ENCODE measurements at regions of chr17 and their contacts with region 1.

Region 1: GRCh38 chr17:72602517-72603419 is 481.9 kb downstream of the SOX9 start:
- DNase-seq: peak; percentile 38 to 53
- H3K4me3 ChIP-seq: peak overlapping the region in 1 of 4 experiments; percentile 36; a peak in 2 of 8 replicates
- H3K27ac ChIP-seq: no peak overlapping the region
- H3K4me1 ChIP-seq: peaks cover 4 to 11% (median 7%) of the 10 kb centered on the region in 4 experiments; a peak in 5 of 7 replicates
- H3K27me3 ChIP-seq: no peaks in the 10 kb centered on the region
- CTCF ChIP-seq: peak; percentile 30 to 70 (median 36)
- EP300 ChIP-seq: no peak
- POLR2A ChIP-seq: no peak
- RAD21 ChIP-seq: peak; percentile 10 to 16; a peak in 2 of 4 replicates

Region 2: GRCh38 chr17:72592242-72592966 is 10.4 kb before region 1 on chr17:
- CTCF ChIA-PET with region 1: interaction called, 11 read pairs
- POLR2A ChIA-PET with region 1: interaction called, 25 read pairs
- DNase-seq: peak; percentile 58 to 90
- H3K4me3 ChIP-seq: peak overlapping the region; percentile 56 to 74 (median 70)
- H3K27ac ChIP-seq: no peak overlapping the region
- H3K4me1 ChIP-seq: peaks cover 9 to 28% (median 12%) of the 10 kb centered on the region in 4 experiments
- H3K27me3 ChIP-seq: peaks cover 8 to 29% (median 22%) of the 10 kb centered on the region in 4 experiments
- CTCF ChIP-seq: no peak
- EP300 ChIP-seq: no peak
- POLR2A ChIP-seq: peak; percentile 99
- RAD21 ChIP-seq: no peak

Region 3: GRCh38 chr17:72614871-72615626 is 12.3 kb after region 1 on chr17:
- CTCF ChIA-PET with region 1: interaction called, 13 read pairs
- POLR2A ChIA-PET with region 1: interaction called, 3 read pairs
- DNase-seq: no peak
- H3K4me3 ChIP-seq: peak overlapping the region in 1 of 4 experiments; percentile 48; a peak in 1 of 8 replicates
- H3K27ac ChIP-seq: no peak overlapping the region
- H3K4me1 ChIP-seq: peaks cover 2 to 6% (median 3%) of the 10 kb centered on the region in 4 experiments; a peak in 4 of 7 replicates
- H3K27me3 ChIP-seq: peaks cover 0 to 2% (median 0%) of the 10 kb centered on the region in 4 experiments; a peak in 2 of 7 replicates
- CTCF ChIP-seq: no peak
- EP300 ChIP-seq: no peak
- POLR2A ChIP-seq: no peak
- RAD21 ChIP-seq: no peak

Region 4: GRCh38 chr17:72640415-72641165 is 37.8 kb after region 1 on chr17:
- CTCF ChIA-PET with region 1: no interaction called
- POLR2A ChIA-PET with region 1: no interaction called
- DNase-seq: no peak
- H3K4me3 ChIP-seq: no peak overlapping the region
- H3K27ac ChIP-seq: no peak overlapping the region
- H3K4me1 ChIP-seq: no peaks in the 10 kb centered on the region
- H3K27me3 ChIP-seq: no peaks in the 10 kb centered on the region
- CTCF ChIP-seq: no peak
- EP300 ChIP-seq: no peak
- POLR2A ChIP-seq: no peak
- RAD21 ChIP-seq: no peak

Region 5: GRCh38 chr17:72699545-72699944 is 96.8 kb after region 1 on chr17:
- CTCF ChIA-PET with region 1: no interaction called
- POLR2A ChIA-PET with region 1: no interaction called
- DNase-seq: no peak
- H3K4me3 ChIP-seq: no peak overlapping the region
- H3K27ac ChIP-seq: no peak overlapping the region
- H3K4me1 ChIP-seq: no peaks in the 10 kb centered on the region
- H3K27me3 ChIP-seq: no peaks in the 10 kb centered on the region; a peak in 1 of 7 replicates
- CTCF ChIP-seq: no peak
- EP300 ChIP-seq: no peak
- POLR2A ChIP-seq: no peak
- RAD21 ChIP-seq: no peak

Region 6: DNA sequence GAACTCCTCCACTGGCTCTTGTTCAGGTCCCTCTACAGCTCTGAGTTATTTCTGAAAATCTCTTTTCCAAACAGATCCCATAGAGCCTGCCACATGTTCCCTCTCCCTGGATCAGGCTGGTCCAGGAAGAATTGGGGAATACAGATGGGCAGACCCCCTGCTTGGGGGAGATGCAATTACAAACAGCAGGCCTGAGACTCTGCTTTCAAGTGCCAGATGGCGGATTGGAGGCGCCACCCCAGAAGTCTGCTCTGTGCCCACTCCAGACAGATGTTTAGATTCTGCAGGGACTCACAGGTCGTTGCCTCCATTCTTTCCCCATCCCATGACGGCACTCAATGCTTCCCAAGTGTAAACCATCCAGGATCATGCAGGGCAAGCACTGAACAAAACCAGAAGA is 173.2 kb after region 1 on chr17:
- CTCF ChIA-PET with region 1: no interaction called
- POLR2A ChIA-PET with region 1: no interaction called
- DNase-seq: no peak
- H3K4me3 ChIP-seq: no peak overlapping the region
- H3K27ac ChIP-seq: no peak overlapping the region
- H3K4me1 ChIP-seq: peaks cover 0 to 7% (median 0%) of the 10 kb centered on the region in 4 experiments; a peak in 3 of 7 replicates
- H3K27me3 ChIP-seq: no peaks in the 10 kb centered on the region
- CTCF ChIP-seq: no peak
- EP300 ChIP-seq: no peak
- POLR2A ChIP-seq: no peak
- RAD21 ChIP-seq: no peak

Region 7: GRCh38 chr17:72862276-72862999 is 259.7 kb after region 1 on chr17:
- CTCF ChIA-PET with region 1: no interaction called
- POLR2A ChIA-PET with region 1: no interaction called
- DNase-seq: no peak
- H3K4me3 ChIP-seq: no peak overlapping the region
- H3K27ac ChIP-seq: no peak overlapping the region
- H3K4me1 ChIP-seq: no peaks in the 10 kb centered on the region
- H3K27me3 ChIP-seq: no peaks in the 10 kb centered on the region
- CTCF ChIP-seq: no peak
- EP300 ChIP-seq: no peak
- POLR2A ChIP-seq: no peak
- RAD21 ChIP-seq: no peak

Measured in H1 (cell line).